ENCODE measurements at regions of chr18 and their contacts with region 1.

Region 1: DNA sequence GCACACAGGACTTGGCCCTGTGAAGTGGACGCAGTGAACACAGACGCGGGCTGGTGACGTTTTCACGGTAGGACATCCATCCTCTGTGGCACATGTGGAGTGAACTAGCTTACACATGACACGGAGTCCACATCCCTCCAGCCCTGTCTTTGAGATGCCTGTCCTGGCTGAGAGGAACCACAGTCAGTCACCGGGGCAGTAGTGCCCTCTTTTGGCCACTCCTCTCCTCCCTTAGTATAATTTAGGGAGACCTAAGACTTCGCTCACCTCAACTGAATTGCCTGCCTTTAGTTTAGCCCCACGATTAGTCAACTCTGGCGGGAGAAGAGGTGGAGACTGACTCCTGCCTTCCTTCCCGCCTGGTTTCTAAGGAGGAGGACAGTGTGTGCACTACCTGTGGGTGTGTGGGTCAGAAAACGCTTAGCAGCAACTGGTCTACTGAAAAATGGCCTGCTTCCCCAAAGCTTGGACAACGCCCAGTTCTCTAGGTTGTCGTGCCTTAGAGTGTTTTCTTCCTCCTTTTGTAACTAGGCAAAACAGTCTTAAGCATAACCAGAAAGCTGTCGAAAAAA is 70.6 kb downstream of the MBP start:
- DNase-seq: no peak
- ATAC-seq: peak; percentile 23

Region 2: DNA sequence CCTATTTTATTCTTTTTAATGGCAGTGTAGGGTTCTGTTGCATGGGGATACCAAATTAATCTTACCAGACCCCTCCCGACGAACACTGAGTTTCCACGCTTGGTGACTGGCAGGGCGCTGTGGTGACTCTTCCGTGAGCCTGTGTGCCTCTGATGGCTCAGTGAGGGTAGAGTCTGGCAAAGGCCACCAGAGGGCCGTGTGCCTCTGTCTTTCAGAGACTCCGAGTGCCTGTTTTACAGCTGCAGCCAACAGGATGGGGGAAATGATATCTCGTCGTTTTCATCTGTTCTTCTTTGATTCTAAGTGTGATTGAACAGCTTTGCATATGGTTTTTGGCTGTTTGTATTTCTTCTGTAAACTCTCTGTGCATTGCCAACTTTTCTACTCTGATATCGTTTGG is 139.9 kb before region 1 on chr18:
- intact Hi-C with region 1: loop called (anchors 5 kb)
- DNase-seq: peak; percentile 71
- ATAC-seq: peak; percentile 93

Measured in sciatic nerve (tissue), 2 donors.